Caco-2 (cell line): ENCODE measurements at regions of chr18 and their contacts with region 1.

Region 1: GRCh38 chr18:74459889-74460288 is 2.8 kb upstream of the DIPK1C start:
- DNase-seq: peak in 1 of 2 experiments; percentile 3
- H3K4me3 ChIP-seq: no peak overlapping the region
- H3K4me3 Mint-ChIP-seq: no peak overlapping the region
- H3K27ac Mint-ChIP-seq: no peak overlapping the region
- H3K4me1 ChIP-seq: no peaks in the 10 kb centered on the region
- H3K4me1 Mint-ChIP-seq: no peaks in the 10 kb centered on the region
- H3K27me3 ChIP-seq: no peaks in the 10 kb centered on the region
- H3K27me3 Mint-ChIP-seq: peaks cover 12% of the 10 kb centered on the region
- CTCF ChIP-seq: peak in 1 of 2 experiments; percentile 38

Region 2: DNA sequence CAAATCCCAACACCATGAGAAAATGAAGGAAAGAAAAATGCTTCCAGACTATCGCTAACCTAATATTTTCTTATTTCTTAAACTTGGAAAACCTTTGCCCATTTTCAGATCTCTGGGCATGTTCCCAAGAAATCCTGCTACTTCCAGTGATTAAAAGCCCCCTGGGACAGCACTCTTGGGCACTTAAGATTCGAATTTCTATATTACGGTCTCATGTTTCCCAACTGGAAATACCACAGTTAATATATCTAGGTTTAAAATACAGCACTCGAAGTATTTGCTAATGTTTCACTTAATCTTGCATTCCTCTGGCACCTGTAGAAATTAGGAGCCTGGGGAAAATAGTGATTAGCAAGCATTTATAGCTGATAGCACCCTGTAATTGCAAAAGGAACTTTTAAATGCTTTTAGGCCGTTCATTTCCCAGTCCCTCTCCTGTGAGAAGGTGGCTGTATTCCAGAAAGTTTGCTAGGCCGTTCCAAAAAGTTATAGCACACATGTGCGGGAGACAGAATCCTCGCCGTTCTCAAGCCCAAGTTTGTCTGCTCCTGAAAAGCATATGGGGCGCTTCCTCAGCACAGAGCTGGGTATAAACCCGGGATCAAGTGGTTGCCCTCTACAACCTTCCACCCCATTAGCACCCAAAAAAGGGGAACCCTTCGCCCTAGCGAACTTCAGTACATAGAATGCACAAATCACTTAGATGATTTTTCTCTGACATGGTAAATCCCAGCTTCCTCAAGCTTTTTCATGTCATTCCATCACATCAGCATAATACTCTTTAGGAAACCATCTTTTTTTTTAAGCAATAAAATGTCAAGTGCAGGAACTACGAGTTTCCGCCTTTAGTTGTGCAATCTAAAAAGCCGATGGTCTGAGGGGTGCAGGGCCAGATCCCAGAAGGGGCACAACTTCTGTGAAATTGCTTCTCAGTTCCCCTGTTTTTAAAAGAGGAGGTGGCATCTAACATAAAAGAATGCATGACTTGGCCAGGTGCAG is 63.4 kb before region 1 on chr18:
- CTCF ChIA-PET with region 1: no interaction called
- POLR2A ChIA-PET with region 1: no interaction called
- intact Hi-C with region 1: loop called (anchors 10 kb)
- DNase-seq: no peak
- H3K4me3 ChIP-seq: no peak overlapping the region
- H3K4me3 Mint-ChIP-seq: no peak overlapping the region
- H3K27ac Mint-ChIP-seq: no peak overlapping the region
- H3K4me1 ChIP-seq: no peaks in the 10 kb centered on the region
- H3K4me1 Mint-ChIP-seq: no peaks in the 10 kb centered on the region
- H3K27me3 ChIP-seq: no peaks in the 10 kb centered on the region; the same call in 1 of the 2 replicates
- H3K27me3 Mint-ChIP-seq: peaks cover 3% of the 10 kb centered on the region
- CTCF ChIP-seq: no peak